Posterior vena cava (tissue), 2 donors: ENCODE measurements at regions of chr2 and their contacts with region 1.

Region 1: DNA sequence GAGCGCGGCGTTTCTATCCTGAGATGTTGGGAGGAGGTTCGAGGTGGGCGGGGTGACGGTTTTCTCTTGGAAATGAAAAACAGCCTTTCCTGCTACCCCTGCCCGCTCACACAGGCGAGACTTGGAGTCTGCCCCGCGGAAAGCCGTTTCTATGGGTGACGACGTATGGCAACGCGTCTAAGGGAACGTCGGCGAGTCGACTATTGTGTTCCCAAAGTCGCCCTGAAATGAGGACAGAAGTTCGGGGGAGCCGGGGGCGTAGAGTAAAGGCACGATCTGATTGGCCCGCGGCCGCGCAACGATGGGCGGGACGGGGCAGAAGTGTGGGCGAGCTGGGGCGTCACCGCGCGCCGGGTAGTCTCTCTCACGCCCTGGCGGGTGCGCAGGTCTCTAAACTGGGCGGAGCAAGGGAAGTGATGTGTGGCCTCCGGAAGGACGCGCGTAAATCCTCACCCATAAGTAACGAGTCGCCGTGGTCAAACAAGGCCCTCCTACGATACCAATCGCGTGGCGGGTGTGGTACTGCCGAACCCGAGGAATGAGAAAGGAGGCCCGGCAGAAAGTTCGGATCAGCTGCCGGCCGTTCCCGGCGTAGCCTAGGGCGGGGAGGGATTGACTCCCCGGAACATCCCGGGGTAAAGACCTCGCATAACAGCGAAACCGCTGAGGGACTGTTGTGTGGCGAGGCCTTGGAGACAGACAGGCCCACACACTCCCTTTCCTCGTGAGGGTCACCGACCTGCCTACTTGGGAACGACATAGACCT is 89.6 kb downstream of the FAM161A start:
- DNase-seq: peak; percentile 100

Region 2: GRCh38 chr2:61538200-61538919 is 225.9 kb before region 1 on chr2 and contains the start of gene XPO1:
- intact Hi-C with region 1: loop called in 1 of 2 experiments (anchors 10 kb)
- DNase-seq: peak; percentile 100
- total RNA-seq, gene XPO1: 78.4 to 136 TPM

Region 3: DNA sequence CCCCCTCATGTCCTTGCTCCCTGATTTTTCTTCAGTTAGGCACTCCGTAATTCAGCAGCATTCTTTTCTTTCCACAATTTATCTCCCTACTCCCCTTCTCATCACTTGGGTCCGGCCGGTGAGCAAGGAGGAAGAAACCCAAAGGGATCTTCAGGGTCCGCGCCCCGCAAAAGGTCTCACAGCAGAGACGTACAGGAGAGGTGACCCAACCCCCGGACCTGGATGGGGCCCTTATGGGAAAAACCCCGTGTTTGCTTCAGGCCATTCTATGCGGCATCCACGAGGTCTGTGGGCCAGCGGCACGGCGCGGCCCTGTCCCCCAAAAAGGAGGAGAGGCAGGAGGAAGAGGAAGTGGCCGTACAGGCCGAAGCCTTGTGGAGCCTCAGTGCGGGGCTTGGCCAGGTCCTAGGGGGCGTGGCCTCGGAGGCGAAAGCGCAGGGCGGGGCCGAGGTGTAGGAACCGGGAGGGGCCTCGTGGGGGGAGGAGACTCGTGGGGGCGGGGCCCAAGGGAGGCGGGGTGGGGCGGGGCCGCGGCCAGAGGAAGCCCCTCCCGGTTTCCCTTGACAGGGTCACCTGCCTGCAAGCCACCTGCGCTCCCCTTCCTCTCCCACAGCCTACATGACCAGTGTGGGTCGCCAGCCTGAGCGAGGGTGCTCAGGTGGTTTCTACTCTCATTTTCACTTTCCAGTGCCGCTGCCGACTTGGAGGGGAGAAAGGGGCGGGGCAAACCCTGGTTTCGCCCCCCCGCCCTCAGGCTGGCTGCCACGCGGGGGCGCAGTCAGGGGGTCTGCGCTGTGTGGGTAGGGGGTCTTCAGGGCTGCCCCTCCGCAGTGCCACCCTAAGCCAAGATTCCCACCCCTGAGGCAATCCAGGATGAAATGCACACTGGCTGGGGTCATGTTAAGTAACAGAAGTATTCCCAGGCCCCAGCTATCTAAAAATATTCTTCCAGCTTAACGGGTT is 69.6 kb before region 1 on chr2:
- intact Hi-C with region 1: loop called in 1 of 2 experiments (anchors 10 kb)
- DNase-seq: peak; percentile 98

Region 4: GRCh38 chr2:61775956-61776570 is 11.8 kb after region 1 on chr2:
- intact Hi-C with region 1: no loop called
- DNase-seq: no peak